Esophagus squamous epithelium (tissue), 5 donors: ENCODE measurements at regions of chr15 and their contacts with region 1.

Region 1: GRCh38 chr15:76327191-76328105 is 9.1 kb upstream of the ISL2 start:
- DNase-seq: no peak
- H3K4me3 ChIP-seq: no peak overlapping the region
- H3K27ac ChIP-seq: no peak overlapping the region
- H3K4me1 ChIP-seq: no peaks in the 10 kb centered on the region
- H3K27me3 ChIP-seq: peaks cover 0 to 64% (median 0%) of the 10 kb centered on the region in 4 donors
- CTCF ChIP-seq: no peak
- POLR2A ChIP-seq: no peak

Region 2: DNA sequence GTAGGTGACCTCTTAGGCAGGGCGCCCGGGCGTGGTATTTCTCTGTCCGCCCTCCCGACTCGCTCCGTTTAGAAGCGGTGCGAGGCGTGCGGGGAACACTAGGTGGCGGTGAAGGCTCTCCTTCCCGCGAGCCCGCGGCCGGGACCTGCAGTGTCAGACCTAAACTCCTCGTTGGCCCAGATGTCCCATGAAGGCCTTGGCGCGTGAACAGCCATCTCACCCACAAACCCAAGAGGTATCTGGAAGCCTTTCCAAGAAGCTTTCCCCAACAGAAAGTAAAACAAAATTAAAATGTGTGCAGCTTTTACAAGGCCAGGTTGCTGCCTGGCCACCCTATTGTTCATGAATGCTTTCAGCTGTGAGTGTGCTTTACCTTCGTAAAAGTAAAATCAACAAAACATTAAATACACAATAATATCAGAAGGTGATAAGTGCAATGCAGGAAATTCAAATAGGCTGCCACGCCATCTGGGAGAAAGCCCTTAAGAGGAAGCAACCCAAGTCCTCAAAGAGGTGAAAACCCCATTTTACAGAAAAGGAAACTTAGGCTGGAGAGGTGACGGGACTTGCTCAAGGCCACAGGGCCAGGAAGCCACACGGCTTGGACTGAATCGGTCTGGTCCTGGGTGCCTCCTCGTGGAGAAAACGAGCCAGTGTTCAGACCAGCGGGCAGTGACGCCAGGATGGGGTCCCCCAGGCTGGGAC is 136.5 kb before region 1 on chr15:
- intact Hi-C with region 1: loop called (anchors 10 kb)
- DNase-seq: no peak
- H3K4me3 ChIP-seq: peak overlapping the region; percentile 17 to 43 (median 22)
- H3K27ac ChIP-seq: no peak overlapping the region
- H3K4me1 ChIP-seq: peaks cover 3 to 39% (median 14%) of the 10 kb centered on the region in 3 donors
- H3K27me3 ChIP-seq: peaks cover 0 to 43% (median 0%) of the 10 kb centered on the region in 4 donors
- CTCF ChIP-seq: peak; percentile 71 to 91 (median 86)
- POLR2A ChIP-seq: no peak